OCI-LY7 (cell line): ENCODE measurements at regions of chr22 and their contacts with region 1.

Region 1: DNA sequence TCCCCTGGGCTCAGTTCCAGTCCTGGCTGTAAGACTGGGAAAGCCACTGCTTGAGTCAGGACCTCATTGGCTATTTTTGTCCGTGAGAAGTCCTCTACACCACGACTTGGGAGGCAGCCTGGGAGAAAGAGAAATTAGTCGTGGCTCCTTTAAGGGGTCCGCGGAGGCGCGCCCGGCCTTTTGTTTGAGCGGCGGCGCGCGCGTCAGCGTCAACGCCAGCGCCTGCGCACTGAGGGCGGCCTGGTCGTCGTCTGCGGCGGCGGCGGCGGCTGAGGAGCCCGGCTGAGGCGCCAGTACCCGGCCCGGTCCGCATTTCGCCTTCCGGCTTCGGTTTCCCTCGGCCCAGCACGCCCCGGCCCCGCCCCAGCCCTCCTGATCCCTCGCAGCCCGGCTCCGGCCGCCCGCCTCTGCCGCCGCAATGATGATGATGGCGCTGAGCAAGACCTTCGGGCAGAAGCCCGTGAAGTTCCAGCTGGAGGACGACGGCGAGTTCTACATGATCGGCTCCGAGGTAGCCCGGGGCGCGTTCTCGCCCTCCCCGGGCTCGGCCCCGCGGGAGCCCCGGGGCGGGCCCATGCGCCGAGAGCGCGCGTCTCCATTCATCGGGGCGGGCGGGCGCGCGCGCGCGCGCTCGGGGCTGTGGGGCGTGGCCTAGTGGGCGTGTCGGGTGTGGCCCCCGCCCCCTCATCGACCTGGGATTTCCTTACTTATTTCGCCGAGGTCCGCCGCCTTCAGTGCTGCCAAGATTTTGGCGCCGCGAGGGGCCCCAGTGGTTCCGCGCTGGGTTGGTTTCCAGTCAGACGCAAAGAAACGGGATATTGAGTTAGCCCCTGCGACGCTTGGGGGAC is at the start of gene SMARCB1:
- DNase-seq: peak; percentile 94
- H3K4me3 ChIP-seq: peak within 1 kb of the TSS; percentile 75
- H3K27ac ChIP-seq: peak within 1 kb of the TSS; percentile 84
- H3K4me1 ChIP-seq: peaks cover 48% of the 10 kb centered on the region
- CTCF ChIP-seq: no peak
- total RNA-seq, gene SMARCB1: 265 and 297 TPM in 2 replicates

Region 2: DNA sequence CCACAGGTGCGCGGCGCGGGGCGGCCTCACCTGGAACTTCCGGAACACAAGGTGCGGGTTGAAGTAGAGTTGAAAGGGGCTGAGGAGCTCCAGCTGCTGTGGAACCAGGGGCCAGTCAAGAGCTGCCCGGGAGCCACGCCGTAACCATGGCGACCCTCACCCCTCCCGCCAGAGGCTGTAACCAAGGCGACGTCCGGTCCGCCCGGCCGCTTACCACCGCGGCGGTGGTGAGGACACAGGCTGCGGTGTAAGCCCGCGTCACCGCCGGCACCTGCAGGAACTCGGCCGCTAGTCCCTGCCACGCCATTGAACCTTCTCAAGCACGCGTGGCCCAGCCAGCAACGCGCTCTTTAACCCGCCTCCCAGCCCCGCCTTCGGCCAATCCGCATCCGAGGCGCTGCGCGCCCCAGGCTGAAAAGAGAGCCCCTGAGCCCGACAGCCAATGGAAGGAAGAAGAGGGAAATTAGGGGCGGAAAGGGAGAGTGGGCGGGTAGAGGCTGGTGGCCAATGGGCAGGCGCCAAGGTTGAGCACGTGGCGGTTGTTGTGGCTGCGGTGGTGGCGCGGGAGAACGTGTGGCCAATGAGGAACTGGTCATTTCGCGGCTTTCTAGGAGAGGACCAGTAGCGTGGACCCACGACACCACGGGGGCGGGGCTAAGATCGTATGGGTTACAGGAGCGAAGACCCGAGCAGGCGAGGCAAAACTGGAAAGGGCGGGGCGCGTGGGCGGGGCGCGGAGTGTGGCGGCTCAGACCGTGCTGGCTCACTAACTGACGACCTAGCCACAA is 51.9 kb after region 1 on chr22 and contains the start of gene DERL3:
- CTCF ChIA-PET with region 1: no interaction called
- POLR2A ChIA-PET with region 1: no interaction called
- intact Hi-C with region 1: loop called (anchors 5 kb)
- DNase-seq: peak; percentile 100
- H3K4me3 ChIP-seq: peak within 1 kb of the TSS; percentile 69
- H3K27ac ChIP-seq: peak within 1 kb of the TSS; percentile 83
- H3K4me1 ChIP-seq: peaks cover 60% of the 10 kb centered on the region
- CTCF ChIP-seq: no peak
- total RNA-seq, gene DERL3: 34.6 and 44.6 TPM in 2 replicates